WTC11 (cell line): ENCODE measurements at regions of chr1 and their contacts with region 1.

Region 1: GRCh38 chr1:67760030-67760821 is 73.0 kb downstream of the GNG12 start:
- DNase-seq: peak; percentile 60
- ATAC-seq: peak; percentile 75
- H3K4me3 Mint-ChIP-seq: no peak overlapping the region
- H3K27ac Mint-ChIP-seq: no peak overlapping the region
- H3K4me1 Mint-ChIP-seq: peaks cover 10% of the 10 kb centered on the region
- H3K27me3 Mint-ChIP-seq: no peaks in the 10 kb centered on the region; the same call in 1 of the 2 replicates
- CTCF ChIP-seq: peak; percentile 61

Region 2: DNA sequence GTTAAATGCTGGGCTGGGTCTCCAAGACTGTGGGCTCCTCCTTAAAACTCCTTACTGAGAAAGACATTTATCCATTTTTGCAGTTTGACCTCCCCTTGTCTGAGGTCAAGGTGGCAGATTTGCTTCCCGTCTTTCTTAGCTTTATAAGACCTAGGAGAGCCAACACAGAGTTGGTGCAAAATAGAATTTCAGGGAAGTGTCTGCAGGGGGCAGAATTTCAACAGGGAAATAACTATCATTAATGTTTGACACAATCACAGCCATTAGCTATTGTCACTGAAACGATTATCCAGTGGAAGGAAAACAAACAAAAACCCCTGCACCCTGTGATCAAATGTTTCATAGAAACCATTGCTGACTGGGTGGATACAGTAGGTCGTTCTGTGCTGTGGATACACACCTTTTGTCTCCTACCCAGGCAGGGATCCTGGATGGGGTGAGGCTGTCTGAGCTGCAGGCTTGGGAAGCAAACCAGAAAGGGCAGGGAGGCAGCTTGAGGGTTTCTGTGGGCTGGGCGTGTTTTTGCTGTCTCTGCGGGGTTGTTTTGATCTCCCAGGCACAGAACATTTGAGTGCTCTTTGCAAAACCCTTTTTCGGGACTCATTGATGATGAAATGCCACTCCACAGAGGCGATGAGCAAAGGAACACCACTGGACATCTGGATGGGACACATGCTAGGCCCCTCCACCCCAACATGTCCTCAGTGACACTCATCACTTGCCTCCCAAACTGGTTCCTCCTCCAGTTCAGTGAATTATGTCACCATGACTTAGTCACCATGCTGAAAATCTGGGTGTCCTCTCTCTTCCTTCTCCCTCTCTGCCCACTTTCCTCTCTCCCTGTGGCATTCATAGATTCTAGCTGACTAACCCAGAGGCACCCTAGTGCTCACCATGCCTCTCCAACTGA is 235.8 kb before region 1 on chr1:
- CTCF ChIA-PET with region 1: interaction called, 10 read pairs
- POLR2A ChIA-PET with region 1: no interaction called
- DNase-seq: no peak
- ATAC-seq: peak; percentile 71
- H3K4me3 Mint-ChIP-seq: no peak overlapping the region
- H3K27ac Mint-ChIP-seq: no peak overlapping the region
- H3K4me1 Mint-ChIP-seq: no peaks in the 10 kb centered on the region
- H3K27me3 Mint-ChIP-seq: peaks cover 98% of the 10 kb centered on the region
- CTCF ChIP-seq: no peak

Region 3: GRCh38 chr1:67561704-67562113 is 198.5 kb before region 1 on chr1:
- CTCF ChIA-PET with region 1: interaction called, 108 read pairs
- POLR2A ChIA-PET with region 1: no interaction called
- DNase-seq: peak; percentile 97
- ATAC-seq: peak; percentile 92
- H3K4me3 Mint-ChIP-seq: no peak overlapping the region
- H3K27ac Mint-ChIP-seq: no peak overlapping the region
- H3K4me1 Mint-ChIP-seq: peaks cover 8% of the 10 kb centered on the region
- H3K27me3 Mint-ChIP-seq: peaks cover 3% of the 10 kb centered on the region; the same call in 1 of the 2 replicates
- CTCF ChIP-seq: peak; percentile 76

Region 4: DNA sequence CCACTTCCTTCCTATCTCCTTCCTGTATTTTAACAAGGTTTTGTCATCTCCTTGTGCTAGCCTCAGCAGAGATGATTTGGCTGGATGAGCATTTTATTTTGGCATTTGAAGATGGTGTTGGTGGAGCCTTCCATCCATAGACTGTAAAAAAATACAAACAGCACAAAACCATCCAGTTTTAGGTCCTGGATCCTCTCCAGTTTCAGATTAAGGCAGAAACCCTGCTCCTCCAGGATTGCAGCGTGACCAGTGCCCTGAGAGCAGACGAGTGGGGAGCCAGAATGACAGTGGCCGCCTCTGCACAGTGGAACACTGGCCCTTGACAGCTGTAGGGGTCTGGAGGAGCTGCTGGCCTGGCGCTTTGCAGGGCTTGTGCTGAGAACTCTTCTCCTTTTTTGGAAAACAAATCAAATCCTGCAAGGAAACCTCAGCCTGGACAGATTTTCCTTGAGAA is 147.4 kb before region 1 on chr1:
- CTCF ChIA-PET with region 1: no interaction called
- POLR2A ChIA-PET with region 1: no interaction called
- DNase-seq: no peak
- ATAC-seq: no peak
- H3K4me3 Mint-ChIP-seq: no peak overlapping the region
- H3K27ac Mint-ChIP-seq: 0 out of 2 replicates have a peak overlapping the region, but pooled peaks have one; percentile 33
- H3K4me1 Mint-ChIP-seq: no peaks in the 10 kb centered on the region
- H3K27me3 Mint-ChIP-seq: no peaks in the 10 kb centered on the region; the same call in 1 of the 2 replicates
- CTCF ChIP-seq: no peak

Region 5: GRCh38 chr1:67685067-67685557 is 75.1 kb before region 1 on chr1 and contains the start of gene GADD45A:
- CTCF ChIA-PET with region 1: interaction called, 46 read pairs
- POLR2A ChIA-PET with region 1: interaction called, 16 read pairs
- DNase-seq: peak; percentile 98
- ATAC-seq: peak; percentile 95
- H3K4me3 Mint-ChIP-seq: peak within 1 kb of the TSS; percentile 88
- H3K27ac Mint-ChIP-seq: peak within 1 kb of the TSS; percentile 17
- H3K4me1 Mint-ChIP-seq: peaks cover 28% of the 10 kb centered on the region
- H3K27me3 Mint-ChIP-seq: no peaks in the 10 kb centered on the region
- CTCF ChIP-seq: no peak
- total RNA-seq, gene GADD45A: 20.8 to 34.5 TPM (median 24.0 TPM) in 3 replicates

Region 6: DNA sequence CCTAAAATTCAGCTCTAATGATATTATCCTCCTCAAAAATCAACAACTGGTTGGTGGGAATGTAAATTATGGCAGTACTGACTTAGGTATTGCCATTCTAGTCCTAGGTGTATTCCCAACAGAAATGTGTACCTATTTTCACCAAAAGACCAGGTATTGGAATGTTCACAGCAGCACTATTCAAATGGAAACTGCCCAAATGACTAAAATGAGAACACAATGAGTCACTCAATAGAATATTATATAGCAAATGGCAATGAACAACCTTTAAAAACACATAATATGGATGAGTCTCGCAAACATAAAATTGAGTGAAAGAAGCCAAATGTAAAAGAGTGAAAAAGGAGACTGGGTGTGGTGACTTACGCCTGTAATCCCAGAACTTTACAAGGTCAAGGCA is 30.4 kb before region 1 on chr1:
- CTCF ChIA-PET with region 1: interaction called, 10 read pairs
- POLR2A ChIA-PET with region 1: no interaction called
- DNase-seq: no peak
- ATAC-seq: no peak
- H3K4me3 Mint-ChIP-seq: no peak overlapping the region
- H3K27ac Mint-ChIP-seq: no peak overlapping the region
- H3K4me1 Mint-ChIP-seq: peaks cover 21% of the 10 kb centered on the region
- H3K27me3 Mint-ChIP-seq: no peaks in the 10 kb centered on the region
- CTCF ChIP-seq: no peak

Region 7: GRCh38 chr1:67785847-67786753 is 25.9 kb after region 1 on chr1:
- CTCF ChIA-PET with region 1: no interaction called
- POLR2A ChIA-PET with region 1: no interaction called
- DNase-seq: no peak
- ATAC-seq: no peak
- H3K4me3 Mint-ChIP-seq: no peak overlapping the region
- H3K27ac Mint-ChIP-seq: no peak overlapping the region
- H3K4me1 Mint-ChIP-seq: peaks cover 12% of the 10 kb centered on the region
- H3K27me3 Mint-ChIP-seq: no peaks in the 10 kb centered on the region
- CTCF ChIP-seq: no peak